ENCODE measurements at regions of chr3 and their contacts with region 1.

Region 1: DNA sequence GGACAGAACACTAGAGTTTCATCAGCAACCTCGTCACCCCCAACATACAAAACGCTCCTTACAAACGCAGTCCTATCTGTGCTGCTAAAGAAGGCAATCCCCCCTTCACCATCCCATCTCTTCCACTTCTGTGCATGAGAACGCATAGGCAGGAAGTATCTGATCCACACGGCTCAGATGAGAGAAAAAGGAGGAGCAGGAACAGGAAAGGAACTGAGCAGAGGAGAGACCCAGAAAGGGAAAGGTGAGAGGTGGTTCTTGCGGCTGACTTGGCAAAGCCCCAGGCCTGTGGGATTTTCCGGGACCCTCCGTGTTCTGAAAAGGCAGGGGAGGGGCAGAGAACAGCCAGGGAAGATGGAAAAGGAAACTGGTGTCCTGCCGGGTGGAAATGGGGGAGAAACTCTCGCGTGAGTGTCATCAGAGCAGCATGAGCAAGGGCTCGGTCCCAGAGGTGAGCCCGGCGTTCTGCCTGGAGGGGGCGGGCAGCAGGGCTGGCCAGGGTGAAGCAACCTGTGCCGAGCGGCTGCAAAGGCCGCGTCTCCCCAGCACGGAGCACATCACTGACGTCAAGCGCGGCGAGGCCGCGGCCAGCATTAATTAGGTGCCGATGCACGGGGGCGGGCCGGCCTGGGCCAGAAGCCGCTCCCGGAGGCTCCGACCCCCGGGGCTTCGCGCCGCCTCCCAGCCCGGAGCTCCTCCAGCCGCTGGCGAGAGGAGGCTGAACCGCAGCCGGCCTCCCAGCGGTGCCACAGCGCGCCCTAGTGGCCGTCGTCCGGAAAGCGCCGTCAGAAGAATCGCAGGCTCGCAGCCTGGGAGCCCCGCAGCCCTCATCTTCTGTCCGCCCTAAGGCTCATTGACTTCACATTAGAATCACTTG is 35.8 kb downstream of the CPN2 start:
- DNase-seq: peak; percentile 63
- ATAC-seq: peak; percentile 87
- H3K4me3 ChIP-seq: peak overlapping the region; percentile 37 to 51
- H3K27ac ChIP-seq: peak overlapping the region; percentile 51
- H3K4me1 ChIP-seq: peaks cover 26 to 62% of the 10 kb centered on the region in 2 experiments
- H3K27me3 ChIP-seq: no peaks in the 10 kb centered on the region
- CTCF ChIP-seq: peak in 2 of 3 experiments; percentile 81 to 87; a peak in 4 of 6 replicates
- POLR2A ChIP-seq: no peak
- RAD21 ChIP-seq: no peak

Region 2: DNA sequence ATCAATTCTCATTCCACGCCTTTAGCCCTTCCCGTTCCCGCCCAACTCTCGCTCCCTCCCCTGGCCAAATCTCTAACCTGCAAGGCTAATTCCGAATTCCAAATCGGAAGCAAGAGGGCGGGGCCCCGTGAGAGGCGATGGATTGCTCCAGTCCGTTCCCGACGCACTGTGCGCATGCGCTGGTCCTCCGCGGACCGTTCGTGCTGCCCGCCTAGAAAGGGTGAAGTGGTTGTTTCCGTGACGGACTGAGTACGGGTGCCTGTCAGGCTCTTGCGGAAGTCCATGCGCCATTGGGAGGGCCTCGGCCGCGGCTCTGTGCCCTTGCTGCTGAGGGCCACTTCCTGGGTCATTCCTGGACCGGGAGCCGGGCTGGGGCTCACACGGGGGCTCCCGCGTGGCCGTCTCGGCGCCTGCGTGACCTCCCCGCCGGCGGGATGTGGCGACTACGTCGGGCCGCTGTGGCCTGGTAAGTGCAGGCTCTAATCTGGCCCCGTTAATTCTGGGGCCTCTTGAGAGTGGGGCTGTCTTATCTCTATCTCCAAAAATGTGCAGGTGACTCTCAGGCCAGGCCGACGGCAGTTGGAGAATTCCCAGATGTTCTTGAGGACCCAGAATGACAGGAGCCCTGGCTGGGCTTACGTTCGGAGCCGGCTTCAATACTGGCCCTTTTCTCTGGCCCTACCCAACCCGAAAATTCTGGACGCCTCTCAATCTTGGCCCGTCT is 722.2 kb before region 1 on chr3 and contains the start of gene OPA1:
- CTCF ChIA-PET with region 1: no interaction called
- POLR2A ChIA-PET with region 1: no interaction called
- RAD21 ChIA-PET with region 1: no interaction called
- intact Hi-C with region 1: loop called (anchors 5 kb)
- DNase-seq: peak; percentile 99
- ATAC-seq: peak; percentile 87
- H3K4me3 ChIP-seq: peak within 1 kb of the TSS; percentile 62 to 89
- H3K27ac ChIP-seq: peak within 1 kb of the TSS; percentile 66
- H3K4me1 ChIP-seq: peaks cover 18 to 32% of the 10 kb centered on the region in 2 experiments
- H3K27me3 ChIP-seq: no peaks in the 10 kb centered on the region
- CTCF ChIP-seq: no peak; a peak in 1 of 6 replicates
- POLR2A ChIP-seq: no peak
- RAD21 ChIP-seq: no peak
- total RNA-seq, gene OPA1: 72.0 TPM

Region 3: DNA sequence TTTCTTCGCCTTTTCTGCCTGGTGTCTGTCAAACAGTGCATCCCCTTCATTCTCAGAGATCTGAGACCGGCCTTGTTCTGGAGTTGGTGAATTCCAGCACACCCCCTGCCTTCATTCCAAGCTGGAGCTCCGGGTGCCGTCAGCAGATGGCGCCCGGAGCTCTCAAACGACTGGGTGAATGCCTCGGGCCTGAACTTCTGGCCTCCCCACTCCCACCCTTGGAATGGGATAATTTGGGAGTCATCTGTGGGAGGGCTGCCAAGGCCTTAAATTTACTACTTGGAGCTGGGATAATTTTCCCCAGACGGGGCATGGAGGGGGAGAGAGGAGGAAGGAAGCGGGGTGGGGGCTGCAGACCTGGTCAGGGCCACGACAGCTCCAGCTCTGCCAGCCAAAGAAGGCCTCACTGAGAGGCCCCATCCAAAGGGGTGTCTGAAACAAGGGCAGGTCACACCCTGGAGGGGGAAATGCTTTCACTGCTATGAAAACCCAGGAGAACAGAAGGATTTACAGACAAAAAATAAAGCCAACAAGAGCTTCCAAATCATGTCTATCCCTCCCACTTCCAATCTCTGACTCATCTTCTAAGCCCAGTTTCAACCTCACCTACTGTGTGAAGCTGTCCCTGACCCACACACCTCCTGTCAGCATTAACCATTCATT is 534.4 kb before region 1 on chr3:
- CTCF ChIA-PET with region 1: interaction called, 145 read pairs
- POLR2A ChIA-PET with region 1: interaction called, 12 read pairs
- RAD21 ChIA-PET with region 1: interaction called, 13 to 30 read pairs
- intact Hi-C with region 1: loop called (anchors 1 kb)
- DNase-seq: no peak
- ATAC-seq: peak; percentile 79
- H3K4me3 ChIP-seq: no peak overlapping the region
- H3K27ac ChIP-seq: no peak overlapping the region
- H3K4me1 ChIP-seq: peaks cover 28 to 40% of the 10 kb centered on the region in 2 experiments
- H3K27me3 ChIP-seq: peaks cover 19% of the 10 kb centered on the region; the same call in 1 of the 2 replicates
- CTCF ChIP-seq: peak; percentile 80 to 93 (median 85)
- POLR2A ChIP-seq: no peak
- RAD21 ChIP-seq: peak; percentile 95

Region 4: DNA sequence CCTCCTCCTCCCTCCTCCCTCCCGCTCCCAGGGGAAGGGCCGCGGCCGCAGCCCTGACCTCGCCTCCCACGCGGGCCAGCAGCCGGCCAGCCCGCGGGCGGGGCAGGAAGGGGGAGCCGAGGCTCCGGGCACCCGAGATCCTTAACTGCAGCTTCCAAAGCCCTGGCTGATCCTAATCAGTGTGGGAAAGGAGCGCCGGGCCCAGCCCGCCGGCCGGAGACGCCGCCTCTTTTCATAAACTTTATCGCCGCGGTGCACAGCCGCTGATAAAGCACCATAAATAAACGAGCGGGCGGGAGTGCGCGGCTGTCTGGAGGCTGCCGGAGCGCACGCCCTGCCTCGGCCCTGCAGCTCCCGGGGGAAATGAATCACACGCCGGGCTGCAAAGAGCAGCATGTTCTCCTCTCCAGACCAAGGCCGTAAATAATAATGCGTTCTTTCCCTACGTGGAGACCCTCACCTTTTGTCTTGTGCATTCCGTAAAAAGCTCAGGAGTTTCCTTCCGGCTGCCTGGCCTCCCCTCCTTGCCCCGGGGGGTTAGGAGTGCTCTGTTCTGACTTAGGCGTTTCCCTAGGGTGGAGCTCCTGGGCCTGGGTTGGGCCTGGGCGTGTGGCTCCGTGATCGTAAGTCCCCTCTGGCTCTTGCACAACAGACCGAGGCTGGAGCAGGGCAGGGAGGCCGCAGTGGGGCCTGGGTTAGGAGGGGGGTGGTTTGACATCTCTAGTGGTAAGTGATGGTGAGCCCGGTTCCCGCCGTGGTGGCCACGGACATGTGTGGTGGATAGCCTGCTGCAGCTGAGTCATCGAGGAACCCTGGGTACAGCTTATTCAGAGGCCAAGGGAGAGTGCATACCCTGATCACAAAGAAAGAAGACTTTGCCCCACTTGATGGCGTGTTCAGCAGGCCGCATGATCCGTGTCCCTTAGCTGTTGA is 311.9 kb before region 1 on chr3:
- CTCF ChIA-PET with region 1: interaction called, 3 read pairs
- POLR2A ChIA-PET with region 1: no interaction called
- RAD21 ChIA-PET with region 1: interaction called in 1 of 2 experiments, 4 read pairs
- intact Hi-C with region 1: loop called (anchors 5 kb)
- DNase-seq: peak; percentile 71
- ATAC-seq: peak; percentile 87
- H3K4me3 ChIP-seq: peak overlapping the region; percentile 42 to 60
- H3K27ac ChIP-seq: peak overlapping the region; percentile 50
- H3K4me1 ChIP-seq: peaks cover 20 to 39% of the 10 kb centered on the region in 2 experiments
- H3K27me3 ChIP-seq: no peaks in the 10 kb centered on the region; the same call in 1 of the 2 replicates
- CTCF ChIP-seq: no peak
- POLR2A ChIP-seq: peak; percentile 80
- RAD21 ChIP-seq: peak; percentile 29; the same call in 1 of the 2 replicates

Region 5: GRCh38 chr3:194134757-194135528 is 180.4 kb before region 1 on chr3:
- CTCF ChIA-PET with region 1: interaction called, 16 read pairs
- POLR2A ChIA-PET with region 1: interaction called, 6 read pairs
- RAD21 ChIA-PET with region 1: interaction called, 4 to 9 read pairs
- intact Hi-C with region 1: no loop called
- DNase-seq: peak; percentile 88
- ATAC-seq: peak; percentile 61
- H3K4me3 ChIP-seq: peak overlapping the region; percentile 49 to 59
- H3K27ac ChIP-seq: peak overlapping the region; percentile 60
- H3K4me1 ChIP-seq: peaks cover 47 to 78% of the 10 kb centered on the region in 2 experiments
- H3K27me3 ChIP-seq: peaks cover 14% of the 10 kb centered on the region; the same call in 1 of the 2 replicates
- CTCF ChIP-seq: no peak
- POLR2A ChIP-seq: no peak
- RAD21 ChIP-seq: no peak

Region 6: GRCh38 chr3:194166682-194167479 is 148.4 kb before region 1 on chr3:
- CTCF ChIA-PET with region 1: interaction called, 13 read pairs
- POLR2A ChIA-PET with region 1: no interaction called
- RAD21 ChIA-PET with region 1: interaction called, 3 to 4 read pairs
- intact Hi-C with region 1: loop called (anchors 2 kb)
- DNase-seq: no peak
- ATAC-seq: no peak
- H3K4me3 ChIP-seq: no peak overlapping the region
- H3K27ac ChIP-seq: no peak overlapping the region
- H3K4me1 ChIP-seq: peaks cover 0 to 13% of the 10 kb centered on the region in 2 experiments; a peak in 2 of 4 replicates
- H3K27me3 ChIP-seq: no peaks in the 10 kb centered on the region
- CTCF ChIP-seq: no peak
- POLR2A ChIP-seq: no peak
- RAD21 ChIP-seq: no peak

Region 7: DNA sequence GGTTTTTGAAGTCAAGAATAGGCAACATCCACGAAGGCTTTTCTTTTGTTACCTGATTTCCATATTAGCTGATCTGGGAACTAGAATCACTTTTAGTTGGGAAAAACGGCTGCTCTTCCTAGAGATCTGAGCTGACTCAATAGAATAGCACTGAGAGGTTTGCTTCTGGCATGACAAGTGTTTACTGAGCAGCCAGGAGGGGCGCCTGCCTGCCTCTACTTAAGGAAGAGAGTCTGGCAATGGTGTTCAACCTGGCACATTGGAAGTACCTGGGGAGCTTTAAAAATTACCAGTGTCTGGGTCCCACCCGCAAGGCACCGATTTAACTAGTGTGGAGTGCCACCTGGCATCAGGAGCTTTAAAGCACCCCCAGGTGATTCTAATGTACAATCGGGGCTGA is 404.7 kb after region 1 on chr3:
- CTCF ChIA-PET with region 1: no interaction called
- POLR2A ChIA-PET with region 1: no interaction called
- RAD21 ChIA-PET with region 1: no interaction called
- intact Hi-C with region 1: no loop called
- DNase-seq: no peak
- ATAC-seq: no peak
- H3K4me3 ChIP-seq: no peak overlapping the region
- H3K27ac ChIP-seq: no peak overlapping the region
- H3K4me1 ChIP-seq: no peaks in the 10 kb centered on the region
- H3K27me3 ChIP-seq: no peaks in the 10 kb centered on the region
- CTCF ChIP-seq: no peak
- POLR2A ChIP-seq: no peak
- RAD21 ChIP-seq: no peak